Calu3 (cell line): ENCODE measurements at regions of chr15 and their contacts with region 1.

Region 1: DNA sequence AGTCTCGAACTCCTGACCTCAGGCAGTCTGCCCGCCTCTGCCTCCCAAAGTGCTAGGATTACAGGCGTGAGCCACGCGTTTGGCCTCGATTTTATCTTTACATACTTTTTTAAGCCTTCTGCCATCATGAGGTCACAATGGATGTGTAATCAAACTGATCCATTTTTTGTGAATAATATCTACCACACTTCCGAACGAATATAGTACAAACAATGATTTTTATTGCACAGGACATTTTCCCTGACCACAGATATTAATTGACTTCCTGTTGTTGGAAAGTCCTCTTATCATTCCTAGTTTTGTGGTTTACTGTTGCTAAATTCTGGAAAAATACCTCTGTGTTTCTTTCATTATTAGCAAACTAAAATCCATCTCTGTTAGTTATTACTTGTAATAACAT is 68.9 kb downstream of the MINDY2 start:
- DNase-seq: peak; percentile 56
- H3K4me3 Mint-ChIP-seq: no peak overlapping the region
- H3K27ac Mint-ChIP-seq: peak overlapping the region; percentile 81
- H3K4me1 Mint-ChIP-seq: peaks cover 20% of the 10 kb centered on the region
- H3K27me3 Mint-ChIP-seq: no peaks in the 10 kb centered on the region
- CTCF ChIP-seq: no peak

Region 2: GRCh38 chr15:58852347-58852746 is 12.3 kb after region 1 on chr15:
- CTCF ChIA-PET with region 1: interaction called, 9 read pairs
- intact Hi-C with region 1: loop called (anchors 2 kb)
- DNase-seq: no peak
- H3K4me3 Mint-ChIP-seq: no peak overlapping the region
- H3K27ac Mint-ChIP-seq: peak overlapping the region; percentile 28
- H3K4me1 Mint-ChIP-seq: peaks cover 19% of the 10 kb centered on the region
- H3K27me3 Mint-ChIP-seq: no peaks in the 10 kb centered on the region
- CTCF ChIP-seq: no peak